Transverse colon (tissue), 4 donors: ENCODE measurements at regions of chr4 and their contacts with region 1.

Region 1: DNA sequence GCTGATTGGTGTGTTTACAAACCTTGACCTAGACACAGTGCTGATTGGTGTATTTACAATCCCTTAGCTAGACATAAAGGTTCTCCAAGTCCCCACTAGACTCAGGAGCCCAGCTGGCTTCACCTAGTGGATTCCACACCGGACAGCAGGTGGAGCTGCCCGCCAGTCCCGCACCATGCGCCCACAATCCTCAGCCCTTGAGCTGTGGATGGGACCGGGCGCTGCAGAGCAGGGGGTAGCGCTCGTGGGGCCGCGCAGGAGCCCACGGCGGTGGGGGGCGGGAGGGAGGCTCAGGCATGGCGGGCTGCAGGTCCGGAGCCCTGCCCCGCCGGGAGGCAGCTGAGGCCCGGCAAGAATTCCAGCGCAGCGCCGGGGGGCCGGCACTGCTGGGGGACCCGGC is 30.7 kb downstream of the MEPE start:
- DNase-seq: no peak
- H3K4me3 ChIP-seq: no peak overlapping the region
- H3K27ac ChIP-seq: no peak overlapping the region
- H3K4me1 ChIP-seq: peaks cover 0 to 17% (median 4%) of the 10 kb centered on the region in 4 donors
- H3K27me3 ChIP-seq: no peaks in the 10 kb centered on the region
- CTCF ChIP-seq: no peak
- EP300 ChIP-seq: no peak
- POLR2A ChIP-seq: no peak

Region 2: DNA sequence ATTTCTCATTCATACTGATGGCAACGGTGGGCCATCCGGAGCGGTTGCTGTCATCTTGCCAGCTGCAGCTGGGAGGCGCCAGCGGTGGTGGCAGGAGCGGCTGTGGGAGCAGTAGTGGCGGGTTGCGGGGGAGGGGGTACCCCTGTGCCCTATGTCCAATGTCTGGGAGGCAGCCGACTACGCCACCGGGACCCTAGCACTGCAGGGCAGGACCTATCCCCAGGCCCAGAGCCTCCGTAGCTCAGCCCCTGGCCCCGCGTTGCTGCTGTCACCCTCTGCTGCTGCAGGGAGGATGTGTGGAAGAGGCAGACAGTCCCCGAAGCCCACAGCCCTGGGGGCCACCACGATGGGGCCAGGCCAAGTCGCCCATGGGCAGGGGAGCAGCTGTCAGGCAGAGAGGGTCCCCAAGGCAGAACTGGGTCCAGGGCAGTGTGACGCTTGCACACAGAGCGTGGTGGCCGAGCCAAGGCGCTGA is 102.1 kb after region 1 on chr4:
- in situ Hi-C with region 1: loop called in 2 of 4 experiments (anchors 5 to 10 kb)
- intact Hi-C with region 1: loop called (anchors 5 kb)
- DNase-seq: no peak
- H3K4me3 ChIP-seq: no peak overlapping the region
- H3K27ac ChIP-seq: no peak overlapping the region
- H3K4me1 ChIP-seq: no peaks in the 10 kb centered on the region
- H3K27me3 ChIP-seq: no peaks in the 10 kb centered on the region
- CTCF ChIP-seq: no peak
- EP300 ChIP-seq: no peak
- POLR2A ChIP-seq: no peak